ENCODE measurements at regions of chr6 and their contacts with region 1.

Region 1: DNA sequence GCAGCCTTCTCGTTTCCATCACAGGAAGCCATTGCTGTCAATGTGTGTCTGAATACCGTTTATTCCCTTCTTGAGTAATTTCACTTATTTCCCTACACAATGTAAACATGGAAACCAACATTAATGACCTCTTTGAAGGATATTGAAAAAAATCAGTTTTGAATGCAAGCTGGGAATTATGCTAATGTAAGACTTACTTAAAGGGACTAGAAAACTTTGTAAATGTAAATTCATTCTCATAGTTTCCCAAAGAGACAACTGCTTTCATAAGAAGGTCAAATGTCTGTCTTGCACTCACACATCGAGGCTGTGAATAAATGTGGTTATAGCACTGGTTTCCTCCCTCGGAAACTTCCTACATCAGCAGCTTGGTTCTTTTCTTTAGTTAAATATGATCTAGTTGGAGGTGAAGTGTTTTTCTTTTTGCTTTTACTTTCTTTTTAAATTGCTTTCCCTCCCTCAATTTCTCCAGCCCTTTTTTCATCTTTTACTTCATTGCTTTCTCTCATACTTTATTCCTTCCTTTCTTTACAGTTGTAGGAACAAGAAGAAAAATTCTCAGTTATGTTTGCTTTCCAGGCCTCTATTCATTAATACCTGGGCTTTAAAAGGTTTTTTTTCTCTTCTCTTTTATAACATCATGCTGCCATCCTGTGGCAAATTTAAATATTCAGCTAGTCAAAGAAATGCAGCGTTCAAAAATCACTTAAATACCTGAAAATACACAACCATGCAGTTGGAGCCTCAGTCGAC is 108.3 kb downstream of the TNFAIP3 start:
- DNase-seq: peak; percentile 82
- H3K4me3 Mint-ChIP-seq: peak overlapping the region; percentile 77
- H3K27ac Mint-ChIP-seq: peak overlapping the region; percentile 92
- H3K4me1 Mint-ChIP-seq: peaks cover 55% of the 10 kb centered on the region
- H3K27me3 Mint-ChIP-seq: no peaks in the 10 kb centered on the region

Region 2: GRCh38 chr6:137389150-137389704 is 586.1 kb before region 1 on chr6:
- intact Hi-C with region 1: loop called (anchors 10 kb)
- DNase-seq: peak; percentile 90
- H3K4me3 Mint-ChIP-seq: peak overlapping the region; percentile 57
- H3K27ac Mint-ChIP-seq: peak overlapping the region; percentile 77
- H3K4me1 Mint-ChIP-seq: peaks cover 35% of the 10 kb centered on the region
- H3K27me3 Mint-ChIP-seq: no peaks in the 10 kb centered on the region

Region 3: GRCh38 chr6:137799950-137800568 is 175.3 kb before region 1 on chr6:
- intact Hi-C with region 1: loop called (anchors 2 kb)
- DNase-seq: peak; percentile 83
- H3K4me3 Mint-ChIP-seq: peak overlapping the region; percentile 18
- H3K27ac Mint-ChIP-seq: peak overlapping the region; percentile 81
- H3K4me1 Mint-ChIP-seq: peaks cover 54% of the 10 kb centered on the region
- H3K27me3 Mint-ChIP-seq: no peaks in the 10 kb centered on the region

Region 4: DNA sequence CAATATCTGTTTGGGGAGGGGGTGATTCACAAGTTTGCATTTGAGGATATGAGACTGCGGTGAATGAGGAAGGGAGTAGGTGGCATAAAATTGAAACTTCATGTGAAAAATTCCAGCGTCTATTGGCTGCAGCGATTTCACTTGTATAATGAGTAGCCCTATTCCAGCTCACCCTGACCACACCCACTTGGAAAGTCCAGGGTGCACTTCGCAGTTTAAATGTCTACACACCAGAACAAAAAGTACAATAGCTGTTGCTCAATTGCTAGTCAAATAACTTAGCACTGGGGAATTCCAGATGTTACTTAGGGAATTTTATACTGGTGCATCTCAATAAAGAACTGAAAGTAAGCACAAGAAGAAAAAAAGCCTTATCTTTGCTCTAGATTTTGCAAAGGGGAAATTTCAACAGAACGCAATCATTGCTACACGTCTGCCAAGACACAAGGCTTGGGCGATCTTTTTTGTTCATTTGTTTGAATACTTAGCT is 102.0 kb before region 1 on chr6:
- intact Hi-C with region 1: loop called (anchors 1 kb)
- DNase-seq: peak; percentile 89
- H3K4me3 Mint-ChIP-seq: peak overlapping the region; percentile 87
- H3K27ac Mint-ChIP-seq: peak overlapping the region; percentile 86
- H3K4me1 Mint-ChIP-seq: peaks cover 44% of the 10 kb centered on the region
- H3K27me3 Mint-ChIP-seq: no peaks in the 10 kb centered on the region

Region 5: GRCh38 chr6:137927777-137928218 is 47.6 kb before region 1 on chr6:
- intact Hi-C with region 1: loop called (anchors 1 kb)
- DNase-seq: peak; percentile 94
- H3K4me3 Mint-ChIP-seq: peak overlapping the region; percentile 68
- H3K27ac Mint-ChIP-seq: peak overlapping the region; percentile 93
- H3K4me1 Mint-ChIP-seq: peaks cover 63% of the 10 kb centered on the region
- H3K27me3 Mint-ChIP-seq: no peaks in the 10 kb centered on the region

Region 6: GRCh38 chr6:138001750-138002349 is 26.5 kb after region 1 on chr6:
- intact Hi-C with region 1: loop called (anchors 2 kb)
- DNase-seq: peak; percentile 89
- H3K4me3 Mint-ChIP-seq: no peak overlapping the region
- H3K27ac Mint-ChIP-seq: no peak overlapping the region
- H3K4me1 Mint-ChIP-seq: peaks cover 18% of the 10 kb centered on the region
- H3K27me3 Mint-ChIP-seq: peaks cover 9% of the 10 kb centered on the region

Region 7: DNA sequence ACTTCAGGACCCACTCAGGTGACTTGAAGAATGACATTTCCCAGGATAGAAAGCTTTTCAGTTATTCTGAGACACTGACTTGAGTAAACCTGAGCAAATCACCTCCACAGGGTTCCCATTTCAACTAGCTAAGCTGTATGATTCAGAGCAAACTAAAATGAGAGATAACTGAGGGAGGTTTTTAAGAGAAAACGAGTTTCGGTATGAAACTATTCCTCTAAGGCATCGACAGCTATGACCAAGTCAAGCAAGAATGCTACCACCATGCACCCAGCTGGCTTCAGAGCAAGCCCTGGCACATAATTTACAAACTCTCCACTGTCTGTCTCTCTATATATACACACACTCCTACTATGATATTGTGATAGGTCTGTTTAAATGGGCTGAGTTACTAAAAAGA is 56.5 kb after region 1 on chr6:
- intact Hi-C with region 1: no loop called
- DNase-seq: no peak
- H3K4me3 Mint-ChIP-seq: no peak overlapping the region
- H3K27ac Mint-ChIP-seq: no peak overlapping the region
- H3K4me1 Mint-ChIP-seq: no peaks in the 10 kb centered on the region
- H3K27me3 Mint-ChIP-seq: peaks cover 7% of the 10 kb centered on the region